ENCODE measurements at regions of chr6 and their contacts with region 1.

Region 1: DNA sequence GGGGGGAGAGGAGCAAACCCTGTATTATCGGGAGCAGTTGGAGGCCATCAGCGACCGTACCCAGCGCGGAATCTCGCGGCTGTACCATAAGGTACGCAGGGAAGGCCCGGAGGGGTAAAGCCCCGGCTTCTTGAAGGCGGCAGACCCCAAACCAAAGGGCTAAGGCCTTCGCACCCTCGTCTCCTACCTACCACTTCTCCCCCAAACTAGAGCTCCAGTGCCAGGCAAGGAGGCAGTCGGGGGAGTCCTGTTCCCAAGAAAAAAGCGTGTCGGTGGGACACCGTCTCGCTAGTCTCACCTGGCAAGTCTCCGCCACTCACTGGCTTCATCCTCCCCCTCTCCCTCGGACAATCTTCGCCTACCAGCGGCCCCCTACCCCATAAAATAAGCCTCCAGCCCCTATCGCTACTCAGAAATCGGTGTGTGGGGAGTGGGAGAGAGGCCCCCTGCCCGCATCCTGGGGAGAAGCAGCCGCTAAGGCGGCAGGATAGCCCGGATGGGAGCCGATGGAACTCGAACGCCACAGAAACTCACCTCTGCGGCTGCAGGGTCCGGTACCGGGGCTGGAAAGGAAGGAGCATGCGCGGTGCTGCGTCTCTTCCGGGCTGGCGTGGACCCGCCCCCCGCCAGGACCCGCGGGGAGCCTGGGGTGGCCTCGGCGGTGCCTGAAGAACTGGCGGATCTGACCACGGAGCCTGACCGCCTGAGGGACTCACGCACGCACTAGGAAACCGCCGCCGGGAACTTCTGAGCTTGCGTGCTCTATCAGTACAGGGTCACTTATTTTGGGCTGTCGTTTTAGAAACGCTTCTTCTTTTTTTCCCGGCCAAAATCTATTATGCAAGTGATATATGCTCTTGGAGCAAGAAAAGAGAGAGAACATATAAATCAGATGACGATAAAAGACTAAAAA is at the start of gene RPS10:
- DNase-seq: peak; percentile 75 to 97
- H3K4me3 ChIP-seq: peak within 1 kb of the TSS; percentile 91 to 99 (median 95)
- H3K27ac ChIP-seq: peak within 1 kb of the TSS; percentile 92
- H3K4me1 ChIP-seq: peaks cover 0 to 11% (median 4%) of the 10 kb centered on the region in 4 experiments; a peak in 5 of 7 replicates
- H3K27me3 ChIP-seq: no peaks in the 10 kb centered on the region
- CTCF ChIP-seq: no peak
- EP300 ChIP-seq: no peak
- POLR2A ChIP-seq: peak; percentile 93 to 96
- RAD21 ChIP-seq: 0 out of 4 replicates have a peak, but pooled peaks have one; percentile 3 to 16
- total RNA-seq, gene RPS10: 2,408 and 2,434 TPM in 2 replicates

Region 2: GRCh38 chr6:34436803-34437643 is 11.3 kb after region 1 on chr6:
- CTCF ChIA-PET with region 1: interaction called, 5 read pairs
- POLR2A ChIA-PET with region 1: interaction called, 14 read pairs
- DNase-seq: no peak
- H3K4me3 ChIP-seq: no peak overlapping the region
- H3K27ac ChIP-seq: no peak overlapping the region
- H3K4me1 ChIP-seq: no peaks in the 10 kb centered on the region
- H3K27me3 ChIP-seq: no peaks in the 10 kb centered on the region
- CTCF ChIP-seq: no peak
- EP300 ChIP-seq: no peak
- POLR2A ChIP-seq: no peak
- RAD21 ChIP-seq: no peak

Region 3: GRCh38 chr6:34447910-34448309 is 22.2 kb after region 1 on chr6:
- CTCF ChIA-PET with region 1: no interaction called
- POLR2A ChIA-PET with region 1: interaction called, 35 read pairs
- DNase-seq: peak in 1 of 2 experiments; percentile 75
- H3K4me3 ChIP-seq: no peak overlapping the region
- H3K27ac ChIP-seq: no peak overlapping the region
- H3K4me1 ChIP-seq: peaks cover 0 to 5% (median 0%) of the 10 kb centered on the region in 4 experiments; a peak in 2 of 7 replicates
- H3K27me3 ChIP-seq: no peaks in the 10 kb centered on the region
- CTCF ChIP-seq: no peak
- EP300 ChIP-seq: no peak
- POLR2A ChIP-seq: no peak
- RAD21 ChIP-seq: no peak

Measured in H1 (cell line).